Body of pancreas (tissue), 4 donors: ENCODE measurements at regions of chr17 and their contacts with region 1.

Region 1: DNA sequence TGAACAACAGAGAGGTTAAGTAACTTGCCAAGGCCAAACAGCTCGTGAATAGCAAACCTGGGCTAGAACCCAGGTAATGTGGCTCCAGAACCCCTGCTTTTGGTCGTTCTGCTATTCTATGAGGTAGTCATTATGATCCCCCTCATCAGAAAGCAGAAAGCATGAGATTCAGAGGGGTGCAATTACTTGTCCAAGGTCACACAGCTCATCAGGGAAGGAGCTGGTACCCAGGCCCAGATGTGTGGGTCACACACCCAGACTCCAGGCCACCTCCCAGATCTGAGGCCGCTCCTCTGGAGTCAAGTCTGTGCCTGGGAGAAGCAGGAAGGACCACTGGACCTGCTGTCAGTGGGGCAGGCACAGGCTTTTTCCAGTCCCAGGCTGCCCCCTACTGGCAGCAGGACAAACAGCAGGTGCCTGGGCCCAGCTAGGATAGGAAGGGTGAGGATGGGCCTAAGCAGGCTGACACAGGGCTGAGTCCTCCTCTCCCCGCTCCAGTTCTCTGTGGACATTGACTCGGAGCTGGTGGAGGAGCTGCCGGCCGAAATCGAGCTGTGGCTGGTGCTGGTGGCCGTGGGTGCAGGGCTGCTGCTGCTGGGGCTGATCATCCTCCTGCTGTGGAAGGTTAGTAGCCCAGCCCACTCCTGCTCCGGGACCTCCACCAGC is 7.8 kb upstream of the PDK2 start:
- DNase-seq: peak; percentile 77 to 80 (median 77)
- ATAC-seq: peak; percentile 84
- H3K4me3 ChIP-seq: no peak overlapping the region
- H3K27ac ChIP-seq: no peak overlapping the region
- H3K4me1 ChIP-seq: no peaks in the 10 kb centered on the region
- H3K27me3 ChIP-seq: no peaks in the 10 kb centered on the region
- CTCF ChIP-seq: peak; percentile 87 to 96 (median 92)
- POLR2A ChIP-seq: no peak

Region 2: DNA sequence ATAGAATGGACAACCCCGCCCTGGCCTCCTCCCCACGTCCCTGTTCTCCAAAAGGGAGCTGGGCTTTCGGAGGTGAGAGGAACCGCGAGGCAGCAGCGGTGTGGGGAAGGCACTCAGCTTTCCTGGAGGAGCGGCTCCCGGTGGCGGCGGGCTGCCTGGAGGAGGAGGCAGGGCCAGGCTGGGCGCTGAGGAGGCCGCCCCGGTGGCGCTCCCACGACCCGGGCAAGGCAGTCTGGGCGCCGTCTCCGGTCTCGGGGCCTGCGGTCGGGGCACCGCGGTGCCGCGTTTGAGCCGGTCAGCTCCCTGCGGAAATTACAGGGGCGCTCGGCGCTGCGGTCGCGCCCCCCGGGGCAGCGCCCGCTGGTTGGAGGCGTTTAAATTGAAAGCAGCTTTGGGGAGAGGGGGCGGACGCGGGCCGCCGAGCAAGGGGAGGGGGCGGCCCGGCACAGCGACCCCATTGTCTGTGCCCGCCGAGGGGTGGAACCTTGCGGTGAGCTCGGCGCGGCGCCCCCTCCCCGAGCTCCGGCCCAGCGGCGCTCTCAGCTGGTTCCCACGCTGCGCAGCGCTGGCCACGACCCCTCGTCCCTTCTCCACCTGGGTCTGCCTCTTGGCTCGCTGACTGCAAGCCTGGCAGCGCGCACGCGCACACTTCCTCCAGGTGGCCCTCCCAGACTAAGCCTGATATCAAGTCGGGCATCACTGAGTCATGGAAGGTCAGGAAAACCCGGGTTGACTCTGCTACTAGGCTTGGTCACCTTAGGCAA is 177.1 kb before region 1 on chr17:
- intact Hi-C with region 1: no loop called
- DNase-seq: peak in 3 of 4 donors; percentile 16 to 52 (median 19)
- ATAC-seq: no peak
- H3K4me3 ChIP-seq: no peak overlapping the region
- H3K27ac ChIP-seq: no peak overlapping the region
- H3K4me1 ChIP-seq: peaks cover 9% of the 10 kb centered on the region
- H3K27me3 ChIP-seq: peaks cover 0 to 9% of the 10 kb centered on the region in 2 donors
- CTCF ChIP-seq: no peak
- POLR2A ChIP-seq: no peak

Region 3: DNA sequence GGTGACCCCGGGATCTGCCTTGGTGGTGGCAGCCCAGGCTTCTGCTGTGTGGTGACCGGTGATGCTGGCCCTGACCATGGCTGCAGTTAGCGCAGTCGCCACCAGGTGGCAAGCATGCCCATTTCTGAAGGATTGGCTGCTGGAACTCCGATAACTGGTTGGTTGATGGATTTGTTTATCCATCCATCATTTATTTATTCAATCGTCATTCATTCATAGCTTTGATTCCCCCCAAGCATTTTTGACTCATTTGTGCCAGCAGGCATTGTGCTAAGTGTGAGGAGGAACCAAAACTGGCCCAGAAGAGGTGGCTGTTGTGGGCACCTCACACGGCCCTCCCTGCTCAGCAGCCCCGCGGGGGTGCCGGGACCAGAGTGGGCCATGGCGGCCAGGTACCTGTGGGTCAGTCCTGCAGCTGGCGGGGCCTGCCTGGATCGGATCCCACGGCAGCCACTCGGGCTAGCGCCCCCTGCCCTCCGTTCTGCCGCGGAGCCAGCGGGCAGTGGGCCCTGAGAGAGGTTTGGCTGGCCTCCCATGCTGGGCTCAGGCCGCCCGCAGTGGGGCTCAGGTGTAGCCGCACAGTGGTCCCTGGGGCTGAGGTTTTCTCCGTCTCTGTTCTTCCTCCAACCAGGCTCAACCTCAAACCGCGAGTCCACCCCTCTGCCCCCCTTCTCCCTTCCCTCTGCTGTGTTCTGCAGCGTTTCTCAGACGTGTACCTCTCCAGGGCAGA is 60.3 kb before region 1 on chr17:
- intact Hi-C with region 1: loop called (anchors 5 kb)
- DNase-seq: peak; percentile 84 to 90 (median 86)
- ATAC-seq: peak; percentile 86
- H3K4me3 ChIP-seq: no peak overlapping the region
- H3K27ac ChIP-seq: peak overlapping the region in 1 of 4 donors; percentile 29
- H3K4me1 ChIP-seq: peaks cover 14% of the 10 kb centered on the region
- H3K27me3 ChIP-seq: no peaks in the 10 kb centered on the region
- CTCF ChIP-seq: peak; percentile 93 to 96 (median 95)
- POLR2A ChIP-seq: no peak